Heart right ventricle (tissue), 16 donors: ENCODE measurements at regions of chr2 and their contacts with region 1.

Region 1: DNA sequence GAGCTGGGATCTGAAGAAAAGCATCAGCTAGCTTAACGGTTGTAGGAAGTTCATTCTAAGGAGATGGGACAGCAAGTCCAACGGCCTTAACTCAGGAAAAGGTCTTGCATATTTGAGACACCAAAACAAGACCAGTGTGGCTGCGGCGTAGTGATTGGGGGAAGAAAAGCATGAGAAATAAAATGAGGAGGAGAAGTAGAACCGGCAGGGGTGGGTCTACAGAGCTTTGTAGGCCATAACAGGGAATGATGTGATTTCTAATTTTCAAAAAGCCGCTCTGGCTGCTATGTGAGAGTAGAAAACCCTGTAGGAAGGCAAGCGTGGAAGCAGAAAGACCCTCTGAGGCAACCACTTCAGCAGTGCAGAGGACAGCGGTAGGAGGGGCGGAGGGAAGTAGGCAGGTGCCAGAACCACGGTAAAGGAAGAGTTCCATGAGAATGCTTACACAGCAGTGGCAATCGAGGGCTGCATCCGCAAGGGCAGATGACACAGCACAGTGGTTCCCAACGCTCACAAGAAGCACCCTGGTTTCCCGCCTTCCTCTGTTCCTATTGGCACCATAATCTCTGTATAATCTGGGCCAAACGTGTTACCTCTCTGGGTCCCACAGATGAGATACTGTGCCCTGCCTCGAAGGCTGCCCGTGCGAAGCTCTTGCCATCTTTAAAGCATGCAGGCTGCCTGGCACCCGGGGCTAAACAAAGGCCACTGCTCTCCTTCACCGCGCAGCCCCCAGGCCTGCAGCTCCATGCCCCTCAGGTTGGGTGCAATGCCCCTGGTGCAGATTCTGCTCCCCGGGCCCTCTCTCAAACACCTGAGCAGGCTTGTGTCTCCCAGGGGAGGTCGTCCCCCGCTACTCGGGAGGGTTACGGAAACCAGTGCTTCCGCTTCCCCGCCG is 791 bp downstream of the ANKRD39 start:
- DNase-seq: no peak
- ATAC-seq: peak in 3 of 8 donors; percentile 0 to 1 (median 0)
- H3K4me3 ChIP-seq: peak overlapping the region; percentile 76 to 95 (median 80)
- H3K27ac ChIP-seq: peak overlapping the region in 9 of 10 donors; percentile 72 to 90 (median 85)
- H3K4me1 ChIP-seq: peaks cover 18 to 55% (median 48%) of the 10 kb centered on the region in 9 donors
- H3K27me3 ChIP-seq: peaks cover 0 to 6% (median 0%) of the 10 kb centered on the region in 7 donors
- CTCF ChIP-seq: no peak

Region 2: GRCh38 chr2:96638144-96639121 is 218.6 kb before region 1 on chr2 and contains the start of gene KANSL3:
- intact Hi-C with region 1: loop called in 1 of 10 experiments (anchors 5 kb)
- DNase-seq: peak; percentile 89 to 91
- ATAC-seq: peak; percentile 84 to 92 (median 90)
- H3K4me3 ChIP-seq: peak within 1 kb of the TSS; percentile 60 to 90 (median 74)
- H3K27ac ChIP-seq: peak within 1 kb of the TSS; percentile 88 to 98 (median 94)
- H3K4me1 ChIP-seq: peaks cover 0 to 52% (median 36%) of the 10 kb centered on the region in 9 donors
- H3K27me3 ChIP-seq: no peaks in the 10 kb centered on the region
- CTCF ChIP-seq: no peak
- total RNA-seq, gene KANSL3: 25.4 to 38.1 (median 31.7) TPM

Region 3: GRCh38 chr2:96769814-96770213 is 87.2 kb before region 1 on chr2:
- intact Hi-C with region 1: loop called in 1 of 10 experiments (anchors 5 kb)
- DNase-seq: peak; percentile 69 to 73
- ATAC-seq: peak; percentile 91 to 98 (median 94)
- H3K4me3 ChIP-seq: no peak overlapping the region
- H3K27ac ChIP-seq: peak overlapping the region in 4 of 10 donors; percentile 43 to 58 (median 50)
- H3K4me1 ChIP-seq: peaks cover 0 to 26% (median 9%) of the 10 kb centered on the region in 9 donors
- H3K27me3 ChIP-seq: no peaks in the 10 kb centered on the region
- CTCF ChIP-seq: no peak

Region 4: GRCh38 chr2:96816128-96816835 is 40.7 kb before region 1 on chr2 and contains the start of gene CNNM3:
- intact Hi-C with region 1: loop called in 2 of 10 experiments (anchors 5 kb)
- DNase-seq: peak; percentile 97 to 98
- ATAC-seq: peak; percentile 94 to 98 (median 96)
- H3K4me3 ChIP-seq: peak within 1 kb of the TSS; percentile 27 to 96 (median 84)
- H3K27ac ChIP-seq: peak within 1 kb of the TSS; percentile 92 to 97 (median 96)
- H3K4me1 ChIP-seq: peaks cover 27 to 71% (median 61%) of the 10 kb centered on the region in 9 donors
- H3K27me3 ChIP-seq: no peaks in the 10 kb centered on the region
- CTCF ChIP-seq: peak; percentile 46 to 91 (median 80)
- total RNA-seq, gene CNNM3: 7.4 to 18.3 (median 13.8) TPM

Region 5: DNA sequence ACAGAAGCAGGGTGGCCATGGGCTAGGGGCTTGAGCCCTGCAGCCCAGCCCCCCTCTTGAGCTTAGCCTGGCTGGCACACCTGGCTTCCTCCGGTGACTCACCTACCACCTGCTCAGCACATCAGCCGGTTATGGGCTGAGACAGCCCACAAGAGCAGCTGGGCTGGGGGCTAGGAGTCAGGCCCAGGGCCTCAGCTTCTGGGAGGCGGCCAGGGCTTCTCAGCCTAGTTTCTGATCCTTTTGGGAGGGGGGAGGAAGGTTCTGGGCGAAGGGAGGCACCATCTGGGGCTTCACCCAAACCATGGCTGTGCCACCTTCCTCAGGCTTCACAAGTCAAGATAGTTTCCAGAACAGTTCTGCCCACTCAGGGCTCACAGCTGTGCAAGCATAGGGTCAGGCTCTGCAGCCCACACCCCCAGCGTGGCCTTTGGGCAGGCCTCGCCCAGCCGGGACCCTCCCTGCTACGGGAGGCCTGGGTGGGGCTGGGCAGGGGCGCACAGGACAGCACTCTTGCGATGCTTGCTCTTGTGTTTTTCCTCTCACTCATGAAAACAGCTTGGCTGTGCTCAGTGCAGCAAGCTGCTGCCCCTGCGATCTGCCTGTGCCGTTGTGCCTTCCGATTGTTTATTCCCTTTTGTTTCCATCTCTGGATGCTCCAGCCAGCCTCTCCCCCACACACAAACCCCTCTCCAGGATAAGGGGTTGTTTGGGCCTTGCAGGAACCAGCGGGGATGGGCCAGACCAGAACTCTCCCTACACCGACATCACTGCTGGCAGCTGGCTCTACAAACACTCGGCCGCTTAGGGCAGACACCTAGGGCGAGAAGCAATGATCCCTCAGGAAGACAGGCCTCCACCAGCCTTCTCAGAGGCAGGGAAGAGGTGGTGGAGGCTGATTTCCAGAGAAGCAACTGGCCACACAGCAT is 39.0 kb after region 1 on chr2:
- intact Hi-C with region 1: no loop called
- DNase-seq: no peak
- ATAC-seq: no peak
- H3K4me3 ChIP-seq: no peak overlapping the region
- H3K27ac ChIP-seq: no peak overlapping the region
- H3K4me1 ChIP-seq: peaks cover 3 to 40% (median 18%) of the 10 kb centered on the region in 9 donors
- H3K27me3 ChIP-seq: no peaks in the 10 kb centered on the region
- CTCF ChIP-seq: no peak

Region 6: DNA sequence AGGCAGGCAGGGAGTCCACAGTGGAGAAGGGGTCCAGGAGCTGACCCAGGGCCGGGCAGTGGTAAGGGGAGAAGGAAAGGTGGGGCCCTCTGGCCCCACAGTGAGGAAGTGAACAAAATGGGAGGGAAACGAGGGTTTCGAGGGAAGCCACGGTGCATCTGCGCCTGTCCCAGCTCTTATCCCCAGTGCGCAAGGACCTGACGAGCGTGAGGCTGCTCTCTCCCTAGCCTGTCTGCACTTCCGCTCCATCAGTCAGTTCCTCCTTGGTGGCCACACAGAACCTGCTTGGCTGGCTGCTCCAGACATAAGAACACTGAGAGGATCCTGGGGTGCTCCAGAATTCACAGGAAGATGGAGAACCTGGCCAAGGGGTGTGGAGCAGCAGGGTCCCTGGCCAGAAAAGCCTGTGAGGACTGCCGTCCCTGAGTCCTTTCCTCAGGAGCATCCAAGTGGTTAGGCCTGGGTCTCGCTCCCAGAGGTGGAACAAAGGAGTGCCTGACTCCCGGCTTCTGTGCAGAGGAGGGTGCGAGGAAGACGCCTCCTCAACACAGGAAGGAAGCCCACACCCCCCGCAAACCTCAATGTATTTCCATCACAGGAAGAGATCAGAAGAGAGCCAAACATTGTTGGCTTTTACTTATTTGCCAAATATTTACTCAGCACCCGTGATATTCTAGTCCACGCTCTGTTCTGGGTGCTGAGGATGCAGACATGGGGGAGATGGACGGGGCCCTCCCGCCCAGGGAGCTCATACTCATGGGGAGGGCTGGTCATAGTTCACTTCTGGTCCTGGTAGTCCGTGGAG is 56.6 kb after region 1 on chr2:
- intact Hi-C with region 1: loop called in 1 of 10 experiments (anchors 2 kb)
- DNase-seq: peak in 1 of 2 donors; percentile 57
- ATAC-seq: peak; percentile 19 to 68 (median 35)
- H3K4me3 ChIP-seq: peak overlapping the region in 2 of 10 donors; percentile 1 to 19
- H3K27ac ChIP-seq: peak overlapping the region in 9 of 10 donors; percentile 49 to 78 (median 69)
- H3K4me1 ChIP-seq: peaks cover 13 to 77% (median 49%) of the 10 kb centered on the region in 9 donors
- H3K27me3 ChIP-seq: no peaks in the 10 kb centered on the region
- CTCF ChIP-seq: no peak

Region 7: DNA sequence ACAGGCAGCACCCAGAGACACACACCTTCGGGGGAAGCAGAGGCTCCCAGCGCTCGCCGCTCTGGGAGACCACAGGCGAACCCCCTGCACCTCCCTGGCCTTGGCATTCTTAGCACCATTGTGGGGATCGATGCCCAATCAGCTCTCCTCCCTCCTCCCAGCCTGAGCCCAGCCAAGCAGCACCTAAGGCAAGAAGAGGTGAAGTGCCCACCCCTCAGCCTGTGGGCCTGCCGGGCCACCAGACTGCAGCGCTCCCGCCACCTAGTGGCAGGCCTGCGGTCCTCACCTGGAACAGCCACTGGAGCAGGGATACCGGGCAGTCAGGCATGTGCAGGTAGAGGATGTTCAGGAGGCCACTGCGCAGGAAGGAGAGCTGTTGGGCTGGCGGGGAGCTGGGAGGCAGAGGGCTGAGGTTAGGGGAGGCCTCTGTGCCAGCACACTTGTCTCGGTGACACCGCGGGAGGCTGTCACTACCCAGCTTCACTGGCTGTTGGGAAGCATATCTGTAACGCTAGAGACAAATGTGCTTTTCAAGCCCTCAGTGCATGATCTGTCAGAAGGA is 94.1 kb after region 1 on chr2:
- intact Hi-C with region 1: loop called (anchors 1 to 5 kb)
- DNase-seq: peak; percentile 69 to 78
- ATAC-seq: peak; percentile 81 to 93 (median 87)
- H3K4me3 ChIP-seq: peak overlapping the region in 1 of 10 donors; percentile 6
- H3K27ac ChIP-seq: no peak overlapping the region
- H3K4me1 ChIP-seq: peaks cover 13 to 47% (median 39%) of the 10 kb centered on the region in 9 donors
- H3K27me3 ChIP-seq: peaks cover 0 to 9% (median 0%) of the 10 kb centered on the region in 7 donors
- CTCF ChIP-seq: peak; percentile 90 to 98 (median 93)

Region 8: DNA sequence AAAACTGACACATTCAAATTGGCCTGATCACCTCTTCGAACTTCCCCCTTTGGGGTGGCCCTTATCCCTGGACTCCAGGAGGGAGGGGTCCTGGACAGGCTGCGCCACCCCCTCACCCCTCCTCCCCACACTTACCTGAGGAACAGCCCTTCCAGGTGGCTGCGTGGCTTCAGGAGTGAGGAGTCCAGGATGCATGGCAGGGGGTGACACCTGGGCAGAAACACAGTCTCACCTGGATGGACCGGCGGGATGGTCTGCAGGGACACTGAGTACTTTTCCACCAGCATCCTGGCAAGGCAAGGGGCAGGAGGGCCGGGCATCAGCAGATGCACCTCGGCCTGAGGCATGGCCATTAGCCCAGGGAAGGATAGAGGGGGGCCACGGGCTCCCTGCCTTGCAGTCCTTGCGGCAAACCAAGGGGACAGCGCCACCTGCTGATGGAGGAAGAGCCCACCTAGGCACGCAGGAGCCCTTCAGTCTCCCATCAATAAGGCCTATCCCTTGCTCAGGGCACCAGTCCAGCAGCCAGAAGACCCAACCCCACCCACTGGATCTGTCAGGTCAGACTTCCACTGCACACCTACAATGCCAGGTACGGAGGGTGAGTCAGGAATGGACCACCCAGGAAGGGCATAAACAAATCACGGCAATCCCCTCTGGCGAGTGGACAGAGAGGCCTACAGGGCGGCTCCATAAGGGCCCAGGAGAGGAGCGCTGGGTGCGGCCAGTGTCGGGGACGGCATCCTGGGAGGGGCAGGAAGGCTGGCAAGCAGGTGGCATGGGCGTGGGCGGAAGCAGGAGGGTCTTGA is 103.3 kb after region 1 on chr2:
- intact Hi-C with region 1: loop called in 1 of 10 experiments (anchors 5 kb)
- DNase-seq: peak; percentile 91 to 92
- ATAC-seq: peak; percentile 93 to 98 (median 96)
- H3K4me3 ChIP-seq: no peak overlapping the region
- H3K27ac ChIP-seq: no peak overlapping the region
- H3K4me1 ChIP-seq: peaks cover 0 to 11% (median 0%) of the 10 kb centered on the region in 9 donors
- H3K27me3 ChIP-seq: no peaks in the 10 kb centered on the region
- CTCF ChIP-seq: peak; percentile 87 to 97 (median 92)